ENCODE measurements at regions of chr17 and their contacts with region 1.

Region 1: GRCh38 chr17:58601976-58602375 is 87.5 kb upstream of the MTMR4 start:
- DNase-seq: no peak
- ATAC-seq: no peak
- H3K4me3 ChIP-seq: no peak overlapping the region
- H3K27ac ChIP-seq: no peak overlapping the region
- H3K4me1 ChIP-seq: no peaks in the 10 kb centered on the region
- H3K27me3 ChIP-seq: no peaks in the 10 kb centered on the region
- CTCF ChIP-seq: no peak

Region 2: GRCh38 chr17:58492238-58493121 is 109.5 kb before region 1 on chr17:
- intact Hi-C with region 1: no loop called
- DNase-seq: no peak
- ATAC-seq: no peak
- H3K4me3 ChIP-seq: no peak overlapping the region
- H3K27ac ChIP-seq: no peak overlapping the region
- H3K4me1 ChIP-seq: no peaks in the 10 kb centered on the region
- H3K27me3 ChIP-seq: no peaks in the 10 kb centered on the region
- CTCF ChIP-seq: no peak

Region 3: DNA sequence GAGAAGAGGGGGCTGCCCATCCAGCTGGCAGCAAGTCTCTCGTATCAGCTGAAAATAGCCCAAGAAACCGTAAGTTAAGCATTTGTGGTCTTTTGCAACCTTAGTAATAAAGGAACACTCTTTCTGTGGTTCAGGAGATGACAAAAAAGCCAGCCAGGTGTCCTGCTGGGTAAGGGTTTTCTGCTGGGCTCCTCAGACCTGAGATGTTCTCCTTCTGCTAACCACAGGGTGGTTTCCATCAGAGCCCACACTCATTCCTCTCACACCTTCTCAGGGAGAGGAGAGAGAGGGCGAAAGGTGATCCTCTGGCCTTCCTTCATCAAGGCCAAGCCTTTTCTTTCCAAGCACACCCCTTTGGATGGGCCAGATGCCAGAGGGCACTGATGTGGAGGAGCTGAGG is 19.2 kb after region 1 on chr17:
- intact Hi-C with region 1: loop called in 1 of 2 experiments (anchors 2 kb)
- DNase-seq: no peak
- ATAC-seq: no peak
- H3K4me3 ChIP-seq: no peak overlapping the region
- H3K27ac ChIP-seq: no peak overlapping the region
- H3K4me1 ChIP-seq: no peaks in the 10 kb centered on the region
- H3K27me3 ChIP-seq: no peaks in the 10 kb centered on the region
- CTCF ChIP-seq: no peak

Measured in psoas muscle (tissue), 8 donors.